Naive thymus-derived CD4-positive, alpha-beta T cell (primary cell): ENCODE measurements at regions of chr11 and their contacts with region 1.

Region 1: GRCh38 chr11:207208-207862 is at the starts of genes BET1L and RIC8A:
- DNase-seq: peak; percentile 92 to 99 (median 98)
- ATAC-seq: peak; percentile 93
- H3K4me3 ChIP-seq: peak within 1 kb of the TSS; percentile 98
- H3K4me3 Mint-ChIP-seq: peak within 1 kb of the TSS; percentile 89 to 100 (median 96)
- H3K27ac ChIP-seq: peak within 1 kb of the TSS; percentile 93
- H3K27ac Mint-ChIP-seq: peak within 1 kb of the TSS; percentile 97 to 100 (median 99)
- H3K4me1 ChIP-seq: peaks cover 28 to 57% of the 10 kb centered on the region in 2 donors
- H3K4me1 Mint-ChIP-seq: peaks cover 17 to 72% (median 50%) of the 10 kb centered on the region in 7 donors
- H3K27me3 ChIP-seq: no peaks in the 10 kb centered on the region
- H3K27me3 Mint-ChIP-seq: no peaks in the 10 kb centered on the region
- total RNA-seq, gene BET1L: 47.1 to 125 (median 63.2) TPM
- total RNA-seq, gene RIC8A: 74.4 to 119 (median 92.0) TPM

Region 2: GRCh38 chr11:250740-251299 is 43.5 kb after region 1 on chr11:
- CTCF ChIA-PET with region 1: no interaction called
- POLR2A ChIA-PET with region 1: interaction called, 11 read pairs
- intact Hi-C with region 1: loop called in 1 of 2 experiments (anchors 1 kb)
- DNase-seq: peak; percentile 72 to 87 (median 83)
- ATAC-seq: peak; percentile 99
- H3K4me3 ChIP-seq: no peak overlapping the region
- H3K4me3 Mint-ChIP-seq: peak overlapping the region in 1 of 10 donors; percentile 20
- H3K27ac ChIP-seq: peak overlapping the region; percentile 32
- H3K27ac Mint-ChIP-seq: peak overlapping the region; percentile 59 to 91 (median 66)
- H3K4me1 ChIP-seq: peaks cover 0 to 3% of the 10 kb centered on the region in 2 donors
- H3K4me1 Mint-ChIP-seq: peaks cover 9 to 18% (median 13%) of the 10 kb centered on the region in 7 donors
- H3K27me3 ChIP-seq: no peaks in the 10 kb centered on the region
- H3K27me3 Mint-ChIP-seq: peaks cover 0 to 3% (median 0%) of the 10 kb centered on the region in 5 donors

Region 3: GRCh38 chr11:288328-289144 is 81.2 kb after region 1 on chr11 and contains the start of gene PGGHG:
- CTCF ChIA-PET with region 1: no interaction called
- POLR2A ChIA-PET with region 1: interaction called, 12 read pairs
- intact Hi-C with region 1: loop called in 1 of 2 experiments (anchors 2 kb)
- DNase-seq: peak in 5 of 9 donors; percentile 40 to 72 (median 49)
- ATAC-seq: peak; percentile 65
- H3K4me3 ChIP-seq: peak within 1 kb of the TSS; percentile 64
- H3K4me3 Mint-ChIP-seq: peak within 1 kb of the TSS; percentile 88 to 100 (median 98)
- H3K27ac ChIP-seq: peak within 1 kb of the TSS; percentile 100
- H3K27ac Mint-ChIP-seq: peak within 1 kb of the TSS; percentile 89 to 100 (median 98)
- H3K4me1 ChIP-seq: peaks cover 16% of the 10 kb centered on the region in 2 donors
- H3K4me1 Mint-ChIP-seq: peaks cover 22 to 52% (median 38%) of the 10 kb centered on the region in 7 donors
- H3K27me3 ChIP-seq: no peaks in the 10 kb centered on the region
- H3K27me3 Mint-ChIP-seq: peaks cover 0 to 14% (median 0%) of the 10 kb centered on the region in 5 donors
- total RNA-seq, gene PGGHG: 325 to 656 (median 348) TPM

Region 4: GRCh38 chr11:406978-407739 is 199.8 kb after region 1 on chr11:
- CTCF ChIA-PET with region 1: no interaction called
- POLR2A ChIA-PET with region 1: interaction called, 15 read pairs
- intact Hi-C with region 1: loop called (anchors 1 kb)
- DNase-seq: peak; percentile 80 to 93 (median 92)
- ATAC-seq: peak; percentile 90
- H3K4me3 ChIP-seq: no peak overlapping the region
- H3K4me3 Mint-ChIP-seq: peak overlapping the region in 6 of 10 donors; percentile 12 to 60 (median 38)
- H3K27ac ChIP-seq: peak overlapping the region; percentile 75
- H3K27ac Mint-ChIP-seq: peak overlapping the region in 7 of 9 donors; percentile 21 to 85 (median 51)
- H3K4me1 ChIP-seq: peaks cover 9 to 13% of the 10 kb centered on the region in 2 donors
- H3K4me1 Mint-ChIP-seq: peaks cover 4 to 21% (median 6%) of the 10 kb centered on the region in 7 donors
- H3K27me3 ChIP-seq: no peaks in the 10 kb centered on the region
- H3K27me3 Mint-ChIP-seq: no peaks in the 10 kb centered on the region

Region 5: GRCh38 chr11:535519-536454 is 328.5 kb after region 1 on chr11 and contains the start of gene HRAS:
- CTCF ChIA-PET with region 1: no interaction called
- POLR2A ChIA-PET with region 1: interaction called, 5 read pairs
- intact Hi-C with region 1: loop called (anchors 1 kb)
- DNase-seq: peak; percentile 92 to 99 (median 96)
- ATAC-seq: peak; percentile 93
- H3K4me3 ChIP-seq: peak within 1 kb of the TSS; percentile 66
- H3K4me3 Mint-ChIP-seq: peak within 1 kb of the TSS; percentile 87 to 97 (median 91)
- H3K27ac ChIP-seq: peak within 1 kb of the TSS; percentile 75
- H3K27ac Mint-ChIP-seq: peak within 1 kb of the TSS; percentile 84 to 96 (median 91)
- H3K4me1 ChIP-seq: peaks cover 20 to 21% of the 10 kb centered on the region in 2 donors
- H3K4me1 Mint-ChIP-seq: peaks cover 5 to 16% (median 11%) of the 10 kb centered on the region in 7 donors
- H3K27me3 ChIP-seq: no peaks in the 10 kb centered on the region
- H3K27me3 Mint-ChIP-seq: no peaks in the 10 kb centered on the region
- total RNA-seq, gene HRAS: 22.3 to 52.0 (median 31.9) TPM

Region 6: GRCh38 chr11:798093-798713 is 590.9 kb after region 1 on chr11 and contains the start of gene SLC25A22:
- CTCF ChIA-PET with region 1: no interaction called
- POLR2A ChIA-PET with region 1: interaction called, 6 read pairs
- intact Hi-C with region 1: loop called in 1 of 2 experiments (anchors 1 kb)
- DNase-seq: peak; percentile 66 to 93 (median 83)
- ATAC-seq: peak; percentile 82
- H3K4me3 ChIP-seq: peak within 1 kb of the TSS; percentile 87
- H3K4me3 Mint-ChIP-seq: peak within 1 kb of the TSS; percentile 84 to 99 (median 90)
- H3K27ac ChIP-seq: peak within 1 kb of the TSS; percentile 93
- H3K27ac Mint-ChIP-seq: peak within 1 kb of the TSS; percentile 61 to 94 (median 92)
- H3K4me1 ChIP-seq: peaks cover 14 to 16% of the 10 kb centered on the region in 2 donors
- H3K4me1 Mint-ChIP-seq: peaks cover 0 to 15% (median 12%) of the 10 kb centered on the region in 7 donors
- H3K27me3 ChIP-seq: no peaks in the 10 kb centered on the region
- H3K27me3 Mint-ChIP-seq: no peaks in the 10 kb centered on the region
- total RNA-seq, gene SLC25A22: 17.4 to 58.4 (median 21.3) TPM

Region 7: GRCh38 chr11:876519-876918 is 669.2 kb after region 1 on chr11:
- CTCF ChIA-PET with region 1: no interaction called
- POLR2A ChIA-PET with region 1: no interaction called
- intact Hi-C with region 1: no loop called
- DNase-seq: no peak
- ATAC-seq: no peak
- H3K4me3 ChIP-seq: no peak overlapping the region
- H3K4me3 Mint-ChIP-seq: no peak overlapping the region
- H3K27ac ChIP-seq: no peak overlapping the region
- H3K27ac Mint-ChIP-seq: no peak overlapping the region
- H3K4me1 ChIP-seq: no peaks in the 10 kb centered on the region
- H3K4me1 Mint-ChIP-seq: peaks cover 0 to 8% (median 0%) of the 10 kb centered on the region in 7 donors
- H3K27me3 ChIP-seq: no peaks in the 10 kb centered on the region
- H3K27me3 Mint-ChIP-seq: no peaks in the 10 kb centered on the region

Region 8: DNA sequence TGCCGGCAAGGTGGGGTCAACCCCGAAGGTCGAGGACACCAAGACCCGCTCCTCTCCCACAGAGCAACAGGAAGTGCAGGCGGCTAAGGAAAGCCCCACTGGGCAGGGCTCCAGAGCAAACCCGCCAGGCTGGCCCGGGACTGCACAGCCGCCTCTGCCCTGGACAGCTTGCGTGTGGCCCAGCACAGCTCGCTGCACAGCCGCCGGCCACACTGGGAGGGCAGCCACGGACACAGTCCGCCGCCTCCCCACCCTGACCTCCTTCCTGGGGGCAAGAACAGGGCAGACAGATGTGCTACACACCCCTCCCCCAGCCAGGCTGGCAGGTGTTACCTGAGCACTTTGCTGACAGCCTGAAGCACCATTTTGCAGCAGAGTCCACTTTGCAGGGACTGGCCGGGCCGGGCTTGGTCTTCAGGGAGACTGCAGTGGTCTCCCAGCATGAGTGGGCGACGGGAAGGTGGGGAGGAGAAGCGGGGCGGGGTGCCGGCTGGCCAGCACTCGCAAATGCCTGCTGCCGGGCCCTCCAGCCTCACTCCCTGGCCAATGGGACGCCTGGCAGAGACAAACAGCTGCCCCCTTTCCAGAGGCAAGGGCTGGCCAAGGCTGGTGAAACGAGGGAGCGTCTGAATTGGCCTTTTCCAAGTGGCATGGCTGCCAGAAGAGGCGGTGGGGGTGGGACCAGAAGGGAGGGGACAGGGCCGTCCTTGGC is 1278.9 kb after region 1 on chr11 and contains the start of gene MOB2:
- CTCF ChIA-PET with region 1: no interaction called
- POLR2A ChIA-PET with region 1: no interaction called
- intact Hi-C with region 1: no loop called
- DNase-seq: no peak
- ATAC-seq: peak; percentile 29
- H3K4me3 ChIP-seq: no peak within 1 kb of the TSS
- H3K4me3 Mint-ChIP-seq: peak within 1 kb of the TSS in 1 of 10 donors; percentile 25
- H3K27ac ChIP-seq: no peak within 1 kb of the TSS
- H3K27ac Mint-ChIP-seq: peak within 1 kb of the TSS in 2 of 9 donors; percentile 8 to 14
- H3K4me1 ChIP-seq: peaks cover 7 to 9% of the 10 kb centered on the region in 2 donors
- H3K4me1 Mint-ChIP-seq: peaks cover 4 to 37% (median 22%) of the 10 kb centered on the region in 7 donors
- H3K27me3 ChIP-seq: no peaks in the 10 kb centered on the region
- H3K27me3 Mint-ChIP-seq: no peaks in the 10 kb centered on the region
- total RNA-seq, gene MOB2: 38.4 to 59.8 (median 51.2) TPM